ENCODE measurements at regions of chr9 and their contacts with region 1.

Region 1: DNA sequence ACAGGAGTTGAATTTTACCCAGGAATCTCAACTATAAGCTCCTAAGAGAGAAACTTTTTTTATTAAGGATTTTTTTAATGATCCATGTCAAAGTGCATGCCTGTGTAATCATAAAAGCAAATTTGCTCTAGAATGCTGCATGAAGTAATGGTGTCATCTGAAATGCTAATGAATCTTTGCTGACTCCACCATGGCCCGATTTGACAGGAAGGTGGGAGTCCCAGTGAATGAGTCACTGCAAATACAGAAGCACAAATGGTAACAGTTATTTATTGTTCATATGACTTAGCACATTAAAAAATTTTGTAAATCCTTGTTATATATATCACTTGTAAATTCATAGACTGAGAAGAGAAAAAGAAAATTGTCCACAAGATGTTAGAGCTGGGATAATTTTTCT is 341.3 kb downstream of the RASEF start:
- DNase-seq: peak; percentile 26
- H3K4me3 ChIP-seq: no peak overlapping the region
- H3K27ac ChIP-seq: no peak overlapping the region
- H3K4me1 ChIP-seq: no peaks in the 10 kb centered on the region
- H3K27me3 ChIP-seq: no peaks in the 10 kb centered on the region
- CTCF ChIP-seq: no peak

Region 2: DNA sequence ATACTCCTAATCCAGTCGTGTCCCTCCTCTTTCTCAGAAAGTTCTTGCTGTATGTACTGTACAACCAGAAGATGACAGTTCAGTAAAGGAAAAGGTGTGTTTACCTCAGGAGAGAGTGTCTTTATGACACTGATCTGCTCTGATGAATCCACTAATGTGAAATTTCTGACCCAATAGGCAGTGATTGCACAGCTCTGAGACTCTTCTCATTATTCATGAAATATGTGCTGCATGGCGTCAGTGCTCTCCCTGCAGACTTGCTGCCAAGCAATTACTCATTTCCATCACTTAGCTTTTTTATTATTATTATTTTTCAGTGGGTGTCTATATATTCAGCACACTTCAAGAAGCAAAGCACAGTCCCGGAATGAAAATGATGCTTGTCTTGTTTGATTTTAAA is 47.7 kb before region 1 on chr9:
- CTCF ChIA-PET with region 1: no interaction called
- POLR2A ChIA-PET with region 1: no interaction called
- intact Hi-C with region 1: loop called (anchors 5 kb)
- DNase-seq: no peak
- H3K4me3 ChIP-seq: no peak overlapping the region
- H3K27ac ChIP-seq: no peak overlapping the region
- H3K4me1 ChIP-seq: no peaks in the 10 kb centered on the region
- H3K27me3 ChIP-seq: peaks cover 3% of the 10 kb centered on the region
- CTCF ChIP-seq: no peak

Measured in A673 (cell line).